B cell (primary cell): ENCODE measurements at regions of chr2 and their contacts with region 1.

Region 1: DNA sequence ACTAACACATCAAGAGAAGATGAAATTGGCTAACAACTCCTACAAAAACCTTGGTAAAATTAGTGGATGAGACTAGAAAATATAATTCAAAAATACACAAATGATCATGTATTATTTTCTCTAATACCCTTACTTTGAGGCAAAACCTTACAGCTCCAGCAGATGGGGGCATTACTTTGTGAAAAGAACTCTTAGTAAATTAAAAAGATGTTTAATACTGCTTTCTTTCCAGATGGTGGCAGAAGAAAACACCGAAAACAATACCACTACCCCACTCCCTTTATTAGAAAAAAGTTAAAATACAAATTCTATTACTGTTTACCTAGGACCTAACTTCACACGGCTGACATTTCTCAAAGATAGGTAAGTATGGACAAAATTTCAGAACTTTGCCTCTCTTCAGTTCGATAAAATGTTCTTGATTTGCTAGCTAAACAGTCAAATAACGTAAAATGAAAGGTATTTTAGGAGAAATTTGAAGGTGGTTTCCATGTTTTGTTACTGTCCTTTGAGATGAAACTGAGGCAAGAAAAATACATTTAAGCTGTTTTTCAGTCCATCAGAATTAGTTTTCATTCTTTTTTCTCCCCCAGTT is 30.6 kb downstream of the ORC4 start:
- DNase-seq: peak; percentile 67
- ATAC-seq: peak; percentile 68
- H3K4me3 ChIP-seq: no peak overlapping the region
- H3K4me3 Mint-ChIP-seq: no peak overlapping the region
- H3K27ac ChIP-seq: no peak overlapping the region
- H3K27ac Mint-ChIP-seq: no peak overlapping the region
- H3K4me1 ChIP-seq: no peaks in the 10 kb centered on the region
- H3K4me1 Mint-ChIP-seq: peaks cover 27% of the 10 kb centered on the region
- H3K27me3 ChIP-seq: no peaks in the 10 kb centered on the region
- H3K27me3 Mint-ChIP-seq: no peaks in the 10 kb centered on the region
- CTCF ChIP-seq: peak; percentile 96

Region 2: DNA sequence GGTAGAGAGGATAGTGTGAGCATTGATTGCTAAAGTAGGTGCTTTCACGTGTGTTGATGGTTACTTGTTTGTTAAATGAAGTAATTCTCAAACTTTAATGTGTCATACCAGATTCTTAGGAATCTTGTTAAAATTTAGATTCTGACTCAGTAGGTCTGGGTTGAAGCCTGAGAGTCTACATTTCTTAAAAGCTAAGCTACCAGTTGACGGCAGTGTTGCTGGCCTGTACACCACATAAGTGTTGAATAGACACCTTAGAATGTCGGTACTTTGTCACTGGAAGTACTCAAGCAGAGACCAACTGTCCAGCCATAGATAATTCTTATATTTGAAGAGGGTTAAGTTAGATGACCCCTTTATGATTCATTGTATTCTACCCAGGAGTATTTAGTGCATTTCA is 65.3 kb before region 1 on chr2:
- CTCF ChIA-PET with region 1: no interaction called
- POLR2A ChIA-PET with region 1: no interaction called
- intact Hi-C with region 1: no loop called
- DNase-seq: no peak
- ATAC-seq: no peak
- H3K4me3 ChIP-seq: no peak overlapping the region
- H3K4me3 Mint-ChIP-seq: no peak overlapping the region
- H3K27ac ChIP-seq: no peak overlapping the region
- H3K27ac Mint-ChIP-seq: no peak overlapping the region
- H3K4me1 ChIP-seq: no peaks in the 10 kb centered on the region
- H3K4me1 Mint-ChIP-seq: no peaks in the 10 kb centered on the region
- H3K27me3 ChIP-seq: no peaks in the 10 kb centered on the region
- H3K27me3 Mint-ChIP-seq: no peaks in the 10 kb centered on the region
- CTCF ChIP-seq: no peak

Region 3: DNA sequence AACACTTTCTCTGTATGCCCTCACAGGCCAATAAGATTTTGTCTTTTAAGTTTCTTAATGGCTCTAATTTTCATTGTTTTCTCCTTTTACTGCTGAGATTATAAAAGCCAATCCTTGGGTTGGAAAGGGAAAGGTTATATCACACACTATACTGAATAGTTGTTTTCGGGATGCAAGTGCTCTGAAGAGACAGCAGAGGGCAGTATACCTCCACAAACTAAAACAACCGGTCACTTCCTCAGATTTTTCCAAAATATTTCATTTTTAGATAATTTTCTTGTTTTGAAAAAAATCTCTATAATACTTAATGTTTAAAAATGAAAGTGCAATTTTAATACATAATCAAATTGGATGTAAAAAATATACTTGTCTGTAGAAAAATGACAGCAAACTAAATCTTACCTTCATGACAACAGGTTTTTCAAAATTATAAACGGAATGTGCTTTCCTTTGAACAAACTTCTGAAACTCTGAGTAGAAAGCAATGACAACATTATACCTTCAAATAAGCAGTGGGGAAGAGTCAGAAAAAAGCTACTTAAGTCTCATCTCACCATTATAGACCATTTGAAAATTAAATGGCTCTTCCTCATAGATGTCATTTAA is 52.1 kb before region 1 on chr2:
- CTCF ChIA-PET with region 1: no interaction called
- POLR2A ChIA-PET with region 1: no interaction called
- intact Hi-C with region 1: loop called (anchors 5 kb)
- DNase-seq: peak; percentile 49
- ATAC-seq: no peak
- H3K4me3 ChIP-seq: no peak overlapping the region
- H3K4me3 Mint-ChIP-seq: no peak overlapping the region
- H3K27ac ChIP-seq: no peak overlapping the region
- H3K27ac Mint-ChIP-seq: no peak overlapping the region
- H3K4me1 ChIP-seq: no peaks in the 10 kb centered on the region
- H3K4me1 Mint-ChIP-seq: no peaks in the 10 kb centered on the region
- H3K27me3 ChIP-seq: no peaks in the 10 kb centered on the region
- H3K27me3 Mint-ChIP-seq: no peaks in the 10 kb centered on the region
- CTCF ChIP-seq: peak; percentile 98

Region 4: DNA sequence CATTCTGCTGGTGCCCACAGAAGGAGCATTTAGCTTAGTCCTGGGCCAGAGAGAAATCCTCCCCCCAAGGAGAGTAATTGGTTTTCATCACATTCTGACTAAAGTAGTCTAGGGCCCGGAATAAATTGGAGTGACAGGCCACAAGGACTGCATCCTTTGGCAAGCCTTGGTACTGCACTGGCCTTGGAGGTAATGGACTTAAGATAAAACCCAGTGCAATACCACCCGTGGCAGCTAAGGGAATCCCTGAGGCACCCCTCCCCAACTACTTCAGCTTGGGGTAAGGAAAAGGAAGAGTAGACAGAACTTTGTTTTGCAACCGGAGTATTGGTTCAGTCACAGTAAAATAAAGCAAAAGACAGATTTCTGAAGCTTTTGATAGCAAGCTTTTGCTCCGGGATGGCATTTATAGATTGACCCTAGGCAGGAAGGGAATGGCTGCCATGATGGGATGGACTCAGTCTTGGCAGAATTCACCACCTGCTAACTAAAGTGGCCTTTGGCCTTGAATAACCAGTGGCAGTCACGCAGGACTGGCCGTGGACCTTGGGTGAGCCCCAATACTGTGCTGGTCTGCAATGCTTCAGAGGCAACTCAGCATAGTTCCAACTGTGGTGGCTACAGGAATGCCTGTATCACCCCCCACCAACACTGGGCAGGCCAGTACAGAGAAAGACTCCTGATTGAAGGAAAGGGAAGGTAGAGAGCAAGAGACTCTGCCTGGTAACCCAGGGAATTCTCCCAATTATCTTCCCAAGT is 16.5 kb after region 1 on chr2:
- CTCF ChIA-PET with region 1: no interaction called
- POLR2A ChIA-PET with region 1: no interaction called
- intact Hi-C with region 1: no loop called
- DNase-seq: no peak
- ATAC-seq: no peak
- H3K4me3 ChIP-seq: no peak overlapping the region
- H3K4me3 Mint-ChIP-seq: no peak overlapping the region
- H3K27ac ChIP-seq: no peak overlapping the region
- H3K27ac Mint-ChIP-seq: no peak overlapping the region
- H3K4me1 ChIP-seq: no peaks in the 10 kb centered on the region
- H3K4me1 Mint-ChIP-seq: peaks cover 36% of the 10 kb centered on the region
- H3K27me3 ChIP-seq: no peaks in the 10 kb centered on the region
- H3K27me3 Mint-ChIP-seq: no peaks in the 10 kb centered on the region
- CTCF ChIP-seq: no peak

Region 5: DNA sequence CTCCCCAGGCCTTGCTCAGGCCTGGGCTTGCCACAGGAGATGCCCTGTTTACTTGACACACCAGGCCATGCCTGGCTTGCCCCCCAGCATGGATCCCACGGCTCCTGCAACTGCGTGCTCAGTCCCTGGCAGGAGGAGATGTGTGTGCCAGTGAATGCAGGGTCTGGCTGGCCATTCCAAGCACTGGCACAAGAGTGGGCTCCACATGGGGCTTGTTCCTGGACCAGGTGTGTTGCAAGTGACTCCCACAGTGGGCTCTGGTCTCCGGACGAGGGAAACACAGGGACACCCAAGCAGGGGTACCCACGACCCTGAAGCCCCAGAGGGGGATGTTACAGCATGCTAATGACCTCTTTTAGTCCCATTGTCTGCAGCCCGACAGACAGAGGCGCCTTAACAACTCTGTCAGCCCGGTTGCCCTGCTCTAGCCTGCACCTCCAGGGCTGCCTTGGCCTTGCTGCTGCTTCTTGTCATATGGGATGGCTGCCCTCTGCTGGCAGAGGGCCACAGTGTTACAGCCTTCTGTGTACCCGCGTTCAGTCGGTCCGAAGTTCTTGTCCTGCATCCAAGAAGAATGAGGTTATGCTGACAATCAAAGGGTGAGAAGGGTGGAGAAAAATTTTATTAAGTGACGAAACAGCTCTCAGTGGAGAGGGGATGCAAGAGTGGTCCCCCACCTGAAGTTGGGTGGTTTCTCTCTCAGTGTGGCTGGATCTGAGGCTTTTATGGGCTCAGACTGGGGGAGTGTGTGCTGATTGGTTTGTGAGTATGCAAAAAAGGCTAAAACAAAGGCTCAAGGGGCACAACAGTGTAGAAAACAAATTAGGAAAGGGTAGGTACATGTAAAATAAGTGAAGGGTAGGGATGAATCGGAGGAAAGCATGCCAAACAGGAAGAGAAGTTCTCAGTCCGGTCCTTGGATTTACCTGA is 211.4 kb after region 1 on chr2:
- CTCF ChIA-PET with region 1: interaction called, 10 read pairs
- POLR2A ChIA-PET with region 1: no interaction called
- intact Hi-C with region 1: loop called (anchors 10 kb)
- DNase-seq: peak; percentile 26
- ATAC-seq: no peak
- H3K4me3 ChIP-seq: no peak overlapping the region
- H3K4me3 Mint-ChIP-seq: no peak overlapping the region
- H3K27ac ChIP-seq: no peak overlapping the region
- H3K27ac Mint-ChIP-seq: no peak overlapping the region
- H3K4me1 ChIP-seq: no peaks in the 10 kb centered on the region
- H3K4me1 Mint-ChIP-seq: no peaks in the 10 kb centered on the region
- H3K27me3 ChIP-seq: no peaks in the 10 kb centered on the region
- H3K27me3 Mint-ChIP-seq: no peaks in the 10 kb centered on the region
- CTCF ChIP-seq: peak; percentile 31

Region 6: GRCh38 chr2:148989882-148990493 is 1000.1 kb after region 1 on chr2:
- CTCF ChIA-PET with region 1: interaction called, 6 read pairs
- POLR2A ChIA-PET with region 1: no interaction called
- intact Hi-C with region 1: loop called (anchors 1 kb)
- DNase-seq: peak; percentile 73
- ATAC-seq: peak; percentile 68
- H3K4me3 ChIP-seq: no peak overlapping the region
- H3K4me3 Mint-ChIP-seq: no peak overlapping the region
- H3K27ac ChIP-seq: no peak overlapping the region
- H3K27ac Mint-ChIP-seq: no peak overlapping the region
- H3K4me1 ChIP-seq: no peaks in the 10 kb centered on the region
- H3K4me1 Mint-ChIP-seq: peaks cover 8% of the 10 kb centered on the region
- H3K27me3 ChIP-seq: no peaks in the 10 kb centered on the region
- H3K27me3 Mint-ChIP-seq: no peaks in the 10 kb centered on the region
- CTCF ChIP-seq: peak; percentile 75

Region 7: GRCh38 chr2:149561309-149561926 is 1571.5 kb after region 1 on chr2:
- CTCF ChIA-PET with region 1: interaction called, 3 read pairs
- POLR2A ChIA-PET with region 1: no interaction called
- intact Hi-C with region 1: loop called (anchors 5 kb)
- DNase-seq: peak; percentile 61
- ATAC-seq: no peak
- H3K4me3 ChIP-seq: no peak overlapping the region
- H3K4me3 Mint-ChIP-seq: no peak overlapping the region
- H3K27ac ChIP-seq: no peak overlapping the region
- H3K27ac Mint-ChIP-seq: no peak overlapping the region
- H3K4me1 ChIP-seq: peaks cover 0 to 9% of the 10 kb centered on the region in 2 donors
- H3K4me1 Mint-ChIP-seq: peaks cover 10% of the 10 kb centered on the region
- H3K27me3 ChIP-seq: no peaks in the 10 kb centered on the region
- H3K27me3 Mint-ChIP-seq: peaks cover 7% of the 10 kb centered on the region
- CTCF ChIP-seq: peak; percentile 98